ENCODE measurements at regions of chr6 and their contacts with region 1.

Region 1: GRCh38 chr6:75643173-75643572 is 41.5 kb downstream of the SENP6 start:
- DNase-seq: no peak
- ATAC-seq: no peak
- H3K4me3 ChIP-seq: no peak overlapping the region
- H3K27ac ChIP-seq: no peak overlapping the region
- H3K4me1 ChIP-seq: no peaks in the 10 kb centered on the region
- H3K27me3 ChIP-seq: no peaks in the 10 kb centered on the region
- CTCF ChIP-seq: no peak

Region 2: DNA sequence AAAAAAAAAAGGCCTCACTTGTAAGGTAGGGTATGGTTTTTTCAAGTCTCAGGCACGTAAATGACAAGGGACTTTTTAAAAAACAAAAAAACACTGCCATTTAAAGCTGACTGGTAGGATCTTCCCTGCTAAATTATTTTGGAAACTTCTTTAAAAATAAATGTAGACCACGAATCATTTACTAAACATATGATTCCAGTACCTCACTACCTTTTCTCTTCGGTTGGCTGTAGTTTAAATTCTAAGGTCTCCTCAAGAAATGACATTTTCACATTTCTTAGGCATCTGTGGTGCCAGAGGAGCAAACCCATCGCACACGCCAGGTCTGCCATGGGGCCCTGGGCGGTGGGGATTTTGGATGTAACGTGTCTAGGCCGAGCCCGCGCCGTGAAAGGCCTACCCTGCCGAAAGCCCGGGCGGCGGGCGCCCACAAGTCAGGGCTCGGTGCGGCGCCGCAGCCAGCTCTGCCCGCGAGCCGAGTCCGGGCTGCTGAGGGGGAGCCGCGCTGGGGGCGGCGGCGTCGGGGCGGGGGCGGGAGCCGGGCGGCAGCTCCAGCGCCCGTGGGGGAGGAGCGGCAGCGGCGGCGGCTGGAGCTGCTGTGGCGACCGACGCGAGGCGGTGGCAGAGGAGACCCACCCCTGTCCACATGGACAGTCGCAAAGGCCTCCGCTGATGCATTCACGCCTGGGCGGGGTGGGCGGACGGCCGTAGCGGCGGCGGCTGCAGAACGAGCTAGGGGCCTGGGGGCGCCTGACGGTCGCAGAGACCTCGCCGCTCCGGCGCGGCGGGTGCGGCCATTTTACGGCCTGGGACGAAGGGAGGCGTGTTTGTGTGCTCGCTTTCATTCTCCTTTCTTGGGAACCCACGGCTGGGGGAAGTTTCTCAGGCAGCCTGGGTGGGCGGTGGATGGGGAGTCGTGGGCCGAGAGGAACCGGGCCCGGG is 41.6 kb before region 1 on chr6 and contains the start of gene SENP6:
- intact Hi-C with region 1: no loop called
- DNase-seq: peak; percentile 84 to 91
- ATAC-seq: peak; percentile 91 to 93 (median 92)
- H3K4me3 ChIP-seq: peak within 1 kb of the TSS; percentile 76
- H3K27ac ChIP-seq: peak within 1 kb of the TSS; percentile 98
- H3K4me1 ChIP-seq: peaks cover 21% of the 10 kb centered on the region
- H3K27me3 ChIP-seq: no peaks in the 10 kb centered on the region
- CTCF ChIP-seq: no peak
- total RNA-seq, gene SENP6: 51.5 to 69.5 (median 63.8) TPM

Region 3: GRCh38 chr6:75673885-75674284 is 30.7 kb after region 1 on chr6:
- intact Hi-C with region 1: loop called in 1 of 2 experiments (anchors 5 kb)
- DNase-seq: no peak
- ATAC-seq: no peak
- H3K4me3 ChIP-seq: no peak overlapping the region
- H3K27ac ChIP-seq: no peak overlapping the region
- H3K4me1 ChIP-seq: no peaks in the 10 kb centered on the region
- H3K27me3 ChIP-seq: no peaks in the 10 kb centered on the region
- CTCF ChIP-seq: no peak

Region 4: DNA sequence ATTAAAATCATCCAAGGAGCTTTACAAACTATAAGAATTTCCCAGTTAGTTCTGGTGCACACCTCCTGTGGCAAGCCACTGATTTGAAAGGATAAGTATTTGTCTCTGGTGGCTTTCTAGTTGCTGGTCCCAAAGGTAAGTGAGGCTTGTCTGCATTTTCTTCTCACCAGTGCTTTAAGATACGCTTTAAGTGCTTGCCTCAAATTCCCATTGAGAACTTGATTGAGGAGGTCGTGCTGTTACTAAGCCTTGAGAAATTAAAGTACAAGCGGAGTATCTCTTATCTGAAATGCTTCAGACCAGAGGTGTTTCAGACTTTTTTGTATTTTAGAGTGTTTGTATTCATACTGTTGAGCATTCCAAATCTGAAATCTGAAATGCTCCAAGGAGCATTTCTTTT is 76.0 kb after region 1 on chr6:
- intact Hi-C with region 1: no loop called
- DNase-seq: no peak
- ATAC-seq: no peak
- H3K4me3 ChIP-seq: no peak overlapping the region
- H3K27ac ChIP-seq: no peak overlapping the region
- H3K4me1 ChIP-seq: no peaks in the 10 kb centered on the region
- H3K27me3 ChIP-seq: no peaks in the 10 kb centered on the region
- CTCF ChIP-seq: no peak

Measured in psoas muscle (tissue), 8 donors.